Activated CD4-positive, alpha-beta memory T cell treated with anti-CD3 and anti-CD28 coated beads, Interleukin-2, amount 10 ng/mL, durations not matched to agents 7 days and 5 days (primary cell): ENCODE measurements at regions of chr3 and their contacts with region 1.

Region 1: GRCh38 chr3:46284981-46285683 is 42.9 kb downstream of the CCR3 start:
- DNase-seq: peak; percentile 83
- H3K4me3 Mint-ChIP-seq: peak overlapping the region; percentile 6
- H3K27ac Mint-ChIP-seq: peak overlapping the region; percentile 92
- H3K4me1 Mint-ChIP-seq: peaks cover 91% of the 10 kb centered on the region
- H3K27me3 Mint-ChIP-seq: peaks cover 4% of the 10 kb centered on the region

Region 2: DNA sequence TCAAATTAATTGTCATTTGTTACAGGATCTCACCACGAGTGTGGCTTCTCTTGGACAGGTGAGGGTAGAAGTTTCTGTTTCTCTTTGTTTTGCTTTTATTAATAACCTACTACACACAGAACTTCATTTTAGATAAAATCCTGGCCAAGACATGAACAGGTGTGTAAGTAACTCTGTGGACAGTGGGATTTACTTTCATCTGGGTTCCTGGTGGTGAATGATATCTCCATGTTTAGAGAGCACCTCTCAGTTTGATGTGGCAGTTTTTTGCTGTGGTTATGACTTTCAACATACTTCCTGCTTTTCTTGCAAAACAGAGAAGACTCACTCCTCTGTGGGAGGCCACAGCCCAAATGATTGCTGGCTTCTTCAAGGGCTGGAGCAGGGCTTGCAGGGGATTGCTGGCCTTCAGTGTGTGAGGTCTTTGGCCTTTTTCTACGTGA is 186.8 kb before region 1 on chr3:
- CTCF ChIA-PET with region 1: interaction called, 3 read pairs
- POLR2A ChIA-PET with region 1: interaction called, 17 read pairs
- DNase-seq: peak; percentile 76
- H3K4me3 Mint-ChIP-seq: peak overlapping the region; percentile 52
- H3K27ac Mint-ChIP-seq: peak overlapping the region; percentile 96
- H3K4me1 Mint-ChIP-seq: peaks cover 70% of the 10 kb centered on the region
- H3K27me3 Mint-ChIP-seq: peaks cover 24% of the 10 kb centered on the region

Region 3: GRCh38 chr3:46214751-46215352 is 70.3 kb before region 1 on chr3:
- CTCF ChIA-PET with region 1: no interaction called
- POLR2A ChIA-PET with region 1: interaction called, 10 read pairs
- DNase-seq: peak; percentile 43
- H3K4me3 Mint-ChIP-seq: no peak overlapping the region
- H3K27ac Mint-ChIP-seq: no peak overlapping the region
- H3K4me1 Mint-ChIP-seq: peaks cover 18% of the 10 kb centered on the region
- H3K27me3 Mint-ChIP-seq: peaks cover 20% of the 10 kb centered on the region

Region 4: DNA sequence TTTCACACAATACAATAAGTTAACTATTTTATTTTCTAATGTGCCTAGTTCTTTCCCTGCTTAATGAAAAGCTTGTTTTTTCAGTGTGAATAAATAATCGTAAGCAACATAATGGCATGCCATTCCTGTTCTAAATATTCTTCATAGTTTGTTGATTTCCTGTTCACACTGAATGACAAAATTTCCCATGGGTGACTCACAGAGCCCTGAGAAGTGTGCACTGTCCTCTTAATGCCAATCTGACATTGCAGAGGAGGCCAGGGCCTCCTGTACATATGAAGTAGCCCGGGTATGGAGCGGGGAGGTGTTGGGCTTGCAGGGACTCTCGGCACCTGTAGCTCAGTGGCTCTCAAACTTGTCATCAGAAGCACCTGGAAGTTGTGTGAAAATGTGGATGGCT is 18.5 kb before region 1 on chr3:
- CTCF ChIA-PET with region 1: no interaction called
- POLR2A ChIA-PET with region 1: interaction called, 13 read pairs
- DNase-seq: no peak
- H3K4me3 Mint-ChIP-seq: no peak overlapping the region
- H3K27ac Mint-ChIP-seq: no peak overlapping the region
- H3K4me1 Mint-ChIP-seq: peaks cover 60% of the 10 kb centered on the region
- H3K27me3 Mint-ChIP-seq: peaks cover 20% of the 10 kb centered on the region

Region 5: DNA sequence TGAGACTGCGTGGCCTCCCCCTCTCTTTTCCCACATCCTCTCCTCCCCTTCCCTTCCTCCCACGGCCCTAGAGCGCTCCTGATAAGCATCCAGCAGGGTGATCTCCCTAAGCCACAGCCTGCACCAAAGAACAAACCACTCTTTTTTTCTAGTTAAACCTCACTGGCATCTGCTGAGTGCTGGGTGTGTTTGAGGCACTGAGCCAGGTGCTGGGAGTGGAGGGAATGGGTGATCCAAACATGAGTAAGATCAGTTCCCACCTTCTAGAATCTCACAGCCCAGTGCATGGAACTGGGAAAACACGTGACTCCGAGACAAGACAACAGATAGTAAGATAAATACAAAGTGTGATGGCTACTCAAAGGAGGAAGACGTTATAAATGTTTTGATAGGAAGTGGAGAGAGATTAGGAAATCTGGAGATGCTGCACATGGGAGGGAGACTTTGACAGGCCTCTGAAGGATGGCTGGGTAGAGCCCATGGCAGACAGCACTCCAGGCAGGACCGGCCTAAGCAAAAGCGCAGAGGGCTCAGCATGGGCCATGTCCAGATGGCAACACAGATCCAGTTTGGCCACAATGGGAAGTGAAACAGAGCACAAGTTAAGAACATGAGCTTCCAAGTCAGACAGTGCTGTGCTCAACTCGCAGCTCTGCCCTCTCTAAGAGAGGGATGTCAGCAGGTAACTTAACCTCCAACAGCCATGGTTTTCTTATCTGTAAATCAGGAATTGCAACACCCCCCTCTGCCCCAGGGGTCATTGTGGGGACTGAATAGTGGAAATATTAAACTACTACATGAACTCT is 12.7 kb after region 1 on chr3:
- CTCF ChIA-PET with region 1: interaction called, 26 read pairs
- POLR2A ChIA-PET with region 1: interaction called, 69 read pairs
- DNase-seq: no peak
- H3K4me3 Mint-ChIP-seq: no peak overlapping the region
- H3K27ac Mint-ChIP-seq: peak overlapping the region; percentile 93
- H3K4me1 Mint-ChIP-seq: peaks cover 93% of the 10 kb centered on the region
- H3K27me3 Mint-ChIP-seq: peaks cover 3% of the 10 kb centered on the region

Region 6: GRCh38 chr3:46349485-46350261 is 64.5 kb after region 1 on chr3:
- CTCF ChIA-PET with region 1: interaction called, 4 read pairs
- POLR2A ChIA-PET with region 1: interaction called, 208 read pairs
- DNase-seq: no peak
- H3K4me3 Mint-ChIP-seq: peak overlapping the region; percentile 49
- H3K27ac Mint-ChIP-seq: peak overlapping the region; percentile 96
- H3K4me1 Mint-ChIP-seq: peaks cover 77% of the 10 kb centered on the region
- H3K27me3 Mint-ChIP-seq: peaks cover 15% of the 10 kb centered on the region

Region 7: GRCh38 chr3:46359733-46360493 is 74.8 kb after region 1 on chr3:
- CTCF ChIA-PET with region 1: interaction called, 4 read pairs
- POLR2A ChIA-PET with region 1: interaction called, 208 read pairs
- DNase-seq: no peak
- H3K4me3 Mint-ChIP-seq: peak overlapping the region; percentile 31
- H3K27ac Mint-ChIP-seq: peak overlapping the region; percentile 62
- H3K4me1 Mint-ChIP-seq: peaks cover 78% of the 10 kb centered on the region
- H3K27me3 Mint-ChIP-seq: peaks cover 31% of the 10 kb centered on the region